Naive thymus-derived CD4-positive, alpha-beta T cell (primary cell): ENCODE measurements at regions of chr9 and their contacts with region 1.

Region 1: DNA sequence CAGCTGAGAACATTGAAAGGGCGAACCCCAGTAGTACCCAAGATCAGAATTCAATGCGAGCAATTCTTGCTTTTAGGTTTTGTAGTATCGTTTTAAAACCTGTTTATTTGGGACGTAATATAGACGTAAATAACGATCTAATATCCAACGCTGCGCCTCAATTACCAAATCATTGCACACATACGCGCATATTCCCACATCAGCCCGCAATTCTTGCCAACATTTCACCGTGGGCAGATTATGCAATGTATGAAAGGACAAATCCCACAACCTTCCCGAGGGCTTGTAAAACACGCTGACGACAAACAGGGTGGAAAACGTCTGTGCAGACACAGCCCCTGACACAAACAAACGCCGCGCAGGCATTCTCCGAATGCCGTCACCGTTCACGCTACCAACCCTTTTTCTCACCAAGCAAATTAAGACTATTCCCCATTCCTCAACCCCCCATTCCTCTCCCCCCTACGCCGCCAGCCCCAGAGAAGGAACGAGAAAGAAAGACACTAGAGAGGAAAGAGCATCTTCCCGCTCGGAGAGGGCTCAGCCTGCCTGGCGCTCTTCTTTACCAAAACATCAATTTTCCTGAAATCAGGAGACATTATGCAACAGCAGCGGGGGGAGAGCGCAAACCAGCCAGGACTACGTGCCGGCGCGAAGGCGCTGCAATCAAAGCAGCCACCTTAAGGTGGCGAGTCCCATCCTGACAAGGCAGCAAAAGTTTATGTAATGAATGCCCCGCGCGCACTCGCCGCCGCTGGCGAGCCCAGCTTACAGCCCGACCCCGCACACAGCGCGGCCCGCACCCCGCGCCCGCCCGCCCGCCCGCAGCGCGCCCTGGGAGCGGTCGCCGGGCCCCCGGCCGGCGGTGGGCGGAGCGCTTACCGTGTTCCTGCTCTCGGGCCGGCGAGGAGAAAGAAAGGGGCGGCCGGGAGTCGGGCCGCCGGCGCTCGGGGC is 597 bp downstream of the NFIL3 start:
- DNase-seq: peak; percentile 50 to 70 (median 61)
- ATAC-seq: peak; percentile 54
- H3K4me3 ChIP-seq: peak overlapping the region; percentile 55
- H3K4me3 Mint-ChIP-seq: peak overlapping the region; percentile 86 to 97 (median 92)
- H3K27ac ChIP-seq: peak overlapping the region; percentile 54
- H3K27ac Mint-ChIP-seq: peak overlapping the region; percentile 5 to 98 (median 61)
- H3K4me1 ChIP-seq: peaks cover 20 to 25% of the 10 kb centered on the region in 2 donors
- H3K4me1 Mint-ChIP-seq: peaks cover 18 to 63% (median 45%) of the 10 kb centered on the region in 7 donors
- H3K27me3 ChIP-seq: peaks cover 0 to 12% of the 10 kb centered on the region in 2 donors
- H3K27me3 Mint-ChIP-seq: peaks cover 0 to 35% (median 21%) of the 10 kb centered on the region in 5 donors

Region 2: GRCh38 chr9:90909225-90909624 is 513.8 kb before region 1 on chr9:
- CTCF ChIA-PET with region 1: interaction called, 73 read pairs
- POLR2A ChIA-PET with region 1: no interaction called
- intact Hi-C with region 1: no loop called
- DNase-seq: no peak
- ATAC-seq: no peak
- H3K4me3 ChIP-seq: no peak overlapping the region
- H3K4me3 Mint-ChIP-seq: no peak overlapping the region
- H3K27ac ChIP-seq: no peak overlapping the region
- H3K27ac Mint-ChIP-seq: no peak overlapping the region
- H3K4me1 ChIP-seq: no peaks in the 10 kb centered on the region
- H3K4me1 Mint-ChIP-seq: peaks cover 0 to 2% (median 0%) of the 10 kb centered on the region in 7 donors
- H3K27me3 ChIP-seq: no peaks in the 10 kb centered on the region
- H3K27me3 Mint-ChIP-seq: peaks cover 0 to 3% (median 0%) of the 10 kb centered on the region in 5 donors

Region 3: DNA sequence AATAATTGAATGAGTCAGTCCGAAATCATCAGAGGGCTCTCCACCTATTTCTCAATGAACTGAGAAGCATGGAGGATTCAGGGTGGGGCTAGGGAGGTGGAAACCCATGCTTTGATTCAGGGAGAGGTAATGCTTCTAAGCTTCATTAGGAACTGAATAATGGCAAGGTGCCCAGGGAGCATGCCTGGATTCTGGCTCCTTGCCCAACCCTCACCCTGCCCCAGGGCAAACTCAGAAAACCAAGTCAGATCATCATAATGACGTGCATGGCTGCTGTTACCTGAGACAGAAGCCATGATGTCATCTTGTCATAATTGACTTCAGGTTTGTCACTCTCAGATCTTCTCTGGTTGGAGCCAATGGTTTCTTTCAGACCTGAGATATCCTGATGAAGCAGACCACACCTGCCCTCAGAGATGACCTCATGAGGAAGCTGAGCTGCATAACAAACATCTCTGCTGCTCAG is 421.9 kb before region 1 on chr9:
- CTCF ChIA-PET with region 1: no interaction called
- POLR2A ChIA-PET with region 1: no interaction called
- intact Hi-C with region 1: no loop called
- DNase-seq: no peak
- ATAC-seq: no peak
- H3K4me3 ChIP-seq: no peak overlapping the region
- H3K4me3 Mint-ChIP-seq: no peak overlapping the region
- H3K27ac ChIP-seq: no peak overlapping the region
- H3K27ac Mint-ChIP-seq: no peak overlapping the region
- H3K4me1 ChIP-seq: no peaks in the 10 kb centered on the region
- H3K4me1 Mint-ChIP-seq: no peaks in the 10 kb centered on the region
- H3K27me3 ChIP-seq: no peaks in the 10 kb centered on the region
- H3K27me3 Mint-ChIP-seq: peaks cover 0 to 6% (median 0%) of the 10 kb centered on the region in 5 donors

Region 4: DNA sequence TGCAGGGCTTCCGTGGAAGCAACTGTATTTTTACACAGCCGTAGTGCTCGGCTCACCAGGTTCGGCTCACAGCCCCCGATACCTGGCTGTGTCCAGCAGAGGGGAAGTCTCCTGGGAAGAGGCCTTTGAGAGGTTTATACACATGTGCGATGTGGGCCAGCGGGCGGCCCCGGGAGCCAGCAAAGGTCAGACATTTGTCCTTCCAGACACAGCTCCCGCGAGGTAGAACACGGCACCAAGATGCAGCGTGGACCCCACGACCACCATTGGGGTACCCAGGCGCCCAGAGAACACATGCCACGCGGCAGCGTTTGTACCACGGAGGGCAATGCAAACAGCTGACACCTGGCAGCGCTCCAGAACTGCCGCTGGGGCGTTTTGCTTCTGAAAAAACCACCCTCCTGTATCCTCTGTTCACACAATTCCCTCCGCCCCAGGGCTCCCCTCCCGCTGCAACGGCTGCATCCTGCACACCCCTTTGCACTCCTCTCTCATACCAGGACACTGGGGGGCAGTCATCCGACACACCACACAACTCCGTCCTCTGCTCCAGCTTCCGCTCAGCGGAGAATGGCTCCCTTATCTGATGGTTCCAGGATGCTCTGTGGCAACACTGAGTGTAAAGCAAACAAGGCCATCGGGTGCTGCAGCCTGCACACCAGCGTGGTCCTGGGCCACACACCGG is 386.1 kb before region 1 on chr9:
- CTCF ChIA-PET with region 1: interaction called, 14 read pairs
- POLR2A ChIA-PET with region 1: interaction called, 3 read pairs
- intact Hi-C with region 1: loop called (anchors 1 kb)
- DNase-seq: peak; percentile 31 to 69 (median 54)
- ATAC-seq: peak; percentile 88
- H3K4me3 ChIP-seq: no peak overlapping the region
- H3K4me3 Mint-ChIP-seq: peak overlapping the region in 9 of 10 donors; percentile 13 to 73 (median 37)
- H3K27ac ChIP-seq: no peak overlapping the region
- H3K27ac Mint-ChIP-seq: peak overlapping the region in 5 of 9 donors; percentile 13 to 38 (median 26)
- H3K4me1 ChIP-seq: peaks cover 8 to 11% of the 10 kb centered on the region in 2 donors
- H3K4me1 Mint-ChIP-seq: peaks cover 10 to 65% (median 11%) of the 10 kb centered on the region in 7 donors
- H3K27me3 ChIP-seq: no peaks in the 10 kb centered on the region
- H3K27me3 Mint-ChIP-seq: peaks cover 0 to 34% (median 14%) of the 10 kb centered on the region in 5 donors

Region 5: DNA sequence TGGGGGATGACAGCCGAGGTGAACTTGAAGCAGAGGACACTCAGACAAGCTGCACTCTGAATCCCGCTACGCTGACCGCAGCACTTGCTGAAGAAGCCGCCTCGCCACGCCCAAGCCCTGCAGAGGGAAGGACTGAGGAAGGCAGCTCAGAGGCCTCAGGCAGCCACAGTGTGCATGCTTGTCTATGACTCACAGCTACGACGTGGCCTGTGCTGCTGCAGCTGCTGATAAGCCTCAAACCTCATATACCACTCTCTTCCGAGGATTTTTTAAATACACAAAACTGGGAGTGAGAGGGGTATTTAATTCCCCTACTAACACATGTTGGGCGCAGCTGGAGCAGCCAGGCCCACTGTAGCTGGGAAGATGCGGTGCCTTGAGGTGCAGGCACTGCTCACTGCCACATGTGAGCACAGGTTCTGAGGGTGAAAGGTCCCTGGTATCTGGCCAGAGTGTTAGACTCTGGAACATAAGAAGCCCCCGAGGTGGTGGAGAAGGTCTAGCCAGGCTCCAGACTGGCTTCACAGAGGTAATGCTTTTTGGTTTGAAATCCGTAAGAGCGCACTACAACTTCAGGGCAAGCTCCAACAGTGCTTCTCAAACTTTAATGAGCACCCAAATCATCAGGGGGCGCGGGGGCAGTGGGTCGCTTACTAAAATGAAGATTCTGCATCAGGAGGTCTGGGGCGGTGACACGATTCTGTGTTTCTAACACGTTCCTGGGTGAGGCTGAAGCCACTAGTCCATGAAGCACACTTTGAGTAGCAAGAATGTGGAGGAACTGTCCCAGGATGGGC is 258.1 kb before region 1 on chr9:
- CTCF ChIA-PET with region 1: no interaction called
- POLR2A ChIA-PET with region 1: no interaction called
- intact Hi-C with region 1: loop called in 1 of 2 experiments (anchors 1 kb)
- DNase-seq: peak in 1 of 9 donors; percentile 78
- ATAC-seq: peak; percentile 90
- H3K4me3 ChIP-seq: no peak overlapping the region
- H3K4me3 Mint-ChIP-seq: peak overlapping the region in 2 of 10 donors; percentile 6 to 89
- H3K27ac ChIP-seq: no peak overlapping the region
- H3K27ac Mint-ChIP-seq: peak overlapping the region in 2 of 9 donors; percentile 72 to 97
- H3K4me1 ChIP-seq: peaks cover 15 to 38% of the 10 kb centered on the region in 2 donors
- H3K4me1 Mint-ChIP-seq: peaks cover 13 to 63% (median 35%) of the 10 kb centered on the region in 7 donors
- H3K27me3 ChIP-seq: no peaks in the 10 kb centered on the region
- H3K27me3 Mint-ChIP-seq: no peaks in the 10 kb centered on the region

Region 6: GRCh38 chr9:91361291-91362050 is 61.6 kb before region 1 on chr9 and contains the start of gene AUH:
- CTCF ChIA-PET with region 1: interaction called, 4 read pairs
- POLR2A ChIA-PET with region 1: interaction called, 5 read pairs
- intact Hi-C with region 1: loop called (anchors 1 kb)
- DNase-seq: peak; percentile 77 to 94 (median 87)
- ATAC-seq: peak; percentile 98
- H3K4me3 ChIP-seq: peak within 1 kb of the TSS; percentile 82
- H3K4me3 Mint-ChIP-seq: peak within 1 kb of the TSS; percentile 89 to 99 (median 98)
- H3K27ac ChIP-seq: peak within 1 kb of the TSS; percentile 82
- H3K27ac Mint-ChIP-seq: peak within 1 kb of the TSS; percentile 93 to 98 (median 96)
- H3K4me1 ChIP-seq: peaks cover 9 to 18% of the 10 kb centered on the region in 2 donors
- H3K4me1 Mint-ChIP-seq: peaks cover 38 to 59% (median 54%) of the 10 kb centered on the region in 7 donors
- H3K27me3 ChIP-seq: no peaks in the 10 kb centered on the region
- H3K27me3 Mint-ChIP-seq: no peaks in the 10 kb centered on the region
- total RNA-seq, gene AUH: 17.2 to 30.1 (median 25.9) TPM

Region 7: GRCh38 chr9:91374939-91375338 is 48.1 kb before region 1 on chr9:
- CTCF ChIA-PET with region 1: no interaction called
- POLR2A ChIA-PET with region 1: no interaction called
- intact Hi-C with region 1: no loop called
- DNase-seq: no peak
- ATAC-seq: peak; percentile 18
- H3K4me3 ChIP-seq: no peak overlapping the region
- H3K4me3 Mint-ChIP-seq: no peak overlapping the region
- H3K27ac ChIP-seq: no peak overlapping the region
- H3K27ac Mint-ChIP-seq: no peak overlapping the region
- H3K4me1 ChIP-seq: no peaks in the 10 kb centered on the region
- H3K4me1 Mint-ChIP-seq: peaks cover 0 to 4% (median 0%) of the 10 kb centered on the region in 7 donors
- H3K27me3 ChIP-seq: no peaks in the 10 kb centered on the region
- H3K27me3 Mint-ChIP-seq: peaks cover 0 to 14% (median 0%) of the 10 kb centered on the region in 5 donors

Region 8: DNA sequence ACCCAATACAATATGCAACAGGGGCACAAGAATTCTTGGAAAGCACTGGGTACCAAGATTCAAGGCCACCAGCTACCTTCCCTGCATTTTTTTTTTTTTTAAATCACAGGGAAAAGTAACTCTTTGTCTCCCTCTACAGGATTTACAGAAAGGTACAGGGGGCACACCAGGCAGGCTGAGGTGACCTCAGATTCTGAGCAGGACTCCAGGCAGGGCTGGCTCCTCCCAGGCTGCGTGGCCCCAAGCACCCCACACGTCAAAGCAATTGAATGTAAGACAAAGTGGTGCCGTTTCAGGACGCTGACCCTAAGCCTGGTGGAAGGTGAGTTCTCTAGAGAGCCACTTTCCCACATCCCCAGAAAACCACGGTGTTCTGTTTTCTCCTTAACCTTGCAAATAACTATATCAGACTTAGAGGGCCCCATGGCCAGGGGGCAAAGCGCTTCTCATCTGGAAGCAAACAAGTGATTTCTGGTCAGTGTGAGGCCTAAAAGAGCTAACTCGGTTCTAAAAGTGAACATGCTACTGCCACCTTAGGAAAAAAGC is 304.4 kb after region 1 on chr9:
- CTCF ChIA-PET with region 1: interaction called, 4 read pairs
- POLR2A ChIA-PET with region 1: no interaction called
- intact Hi-C with region 1: loop called in 1 of 2 experiments (anchors 5 kb)
- DNase-seq: peak in 5 of 9 donors; percentile 10 to 34 (median 14)
- ATAC-seq: peak; percentile 65
- H3K4me3 ChIP-seq: no peak overlapping the region
- H3K4me3 Mint-ChIP-seq: no peak overlapping the region
- H3K27ac ChIP-seq: no peak overlapping the region
- H3K27ac Mint-ChIP-seq: no peak overlapping the region
- H3K4me1 ChIP-seq: no peaks in the 10 kb centered on the region
- H3K4me1 Mint-ChIP-seq: peaks cover 0 to 7% (median 0%) of the 10 kb centered on the region in 7 donors
- H3K27me3 ChIP-seq: no peaks in the 10 kb centered on the region
- H3K27me3 Mint-ChIP-seq: peaks cover 0 to 6% (median 1%) of the 10 kb centered on the region in 5 donors